IMR-90 (cell line): ENCODE measurements at regions of chr20 and their contacts with region 1.

Region 1: GRCh38 chr20:63775096-63775978 is 35.8 kb downstream of the SLC2A4RG start:
- DNase-seq: peak; percentile 19
- ATAC-seq: peak; percentile 71
- H3K4me3 ChIP-seq: peak overlapping the region; percentile 18; the same call in 1 of the 2 replicates
- H3K27ac ChIP-seq: no peak overlapping the region
- H3K4me1 ChIP-seq: peaks cover 8% of the 10 kb centered on the region
- H3K27me3 ChIP-seq: no peaks in the 10 kb centered on the region
- CTCF ChIP-seq: peak; percentile 67
- POLR2A ChIP-seq: no peak
- RAD21 ChIP-seq: peak; percentile 61

Region 2: DNA sequence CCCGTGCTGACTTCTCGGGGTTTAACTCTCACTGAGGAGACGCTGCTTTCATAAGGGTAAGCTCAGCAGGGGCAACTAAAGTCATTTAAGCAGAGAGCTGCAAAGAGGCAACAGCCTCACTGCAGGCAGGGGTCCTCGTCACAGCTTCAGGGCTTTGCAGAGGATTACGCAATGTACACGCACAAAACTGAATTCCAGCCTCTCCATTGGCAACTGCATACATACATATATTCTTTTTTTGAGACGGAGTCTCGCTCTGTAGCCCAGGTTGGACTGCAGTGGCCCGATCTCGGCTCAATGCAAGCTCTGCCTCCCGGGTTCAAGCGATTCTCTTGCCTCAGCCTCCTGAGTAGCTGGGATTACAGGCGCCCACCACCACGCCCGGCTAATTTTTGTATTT is 150.9 kb before region 1 on chr20:
- CTCF ChIA-PET with region 1: no interaction called
- POLR2A ChIA-PET with region 1: no interaction called
- dilution Hi-C with region 1: no loop called
- in situ Hi-C with region 1: no loop called
- intact Hi-C with region 1: no loop called
- DNase-seq: peak; percentile 49
- ATAC-seq: no peak
- H3K4me3 ChIP-seq: no peak overlapping the region
- H3K27ac ChIP-seq: no peak overlapping the region
- H3K4me1 ChIP-seq: peaks cover 2% of the 10 kb centered on the region; the same call in 1 of the 2 replicates
- H3K27me3 ChIP-seq: no peaks in the 10 kb centered on the region
- CTCF ChIP-seq: 0 out of 2 replicates have a peak, but pooled peaks have one; percentile 15
- POLR2A ChIP-seq: no peak
- RAD21 ChIP-seq: no peak

Region 3: GRCh38 chr20:63733186-63734081 is 41.9 kb before region 1 on chr20:
- CTCF ChIA-PET with region 1: no interaction called
- POLR2A ChIA-PET with region 1: no interaction called
- dilution Hi-C with region 1: no loop called
- in situ Hi-C with region 1: no loop called
- intact Hi-C with region 1: no loop called
- DNase-seq: no peak
- ATAC-seq: no peak
- H3K4me3 ChIP-seq: no peak overlapping the region
- H3K27ac ChIP-seq: no peak overlapping the region
- H3K4me1 ChIP-seq: no peaks in the 10 kb centered on the region; the same call in 1 of the 2 replicates
- H3K27me3 ChIP-seq: no peaks in the 10 kb centered on the region
- CTCF ChIP-seq: no peak
- POLR2A ChIP-seq: no peak
- RAD21 ChIP-seq: no peak

Region 4: GRCh38 chr20:63973636-63974402 is 198.5 kb after region 1 on chr20:
- CTCF ChIA-PET with region 1: interaction called, 3 read pairs
- POLR2A ChIA-PET with region 1: no interaction called
- dilution Hi-C with region 1: no loop called
- in situ Hi-C with region 1: no loop called
- intact Hi-C with region 1: loop called (anchors 5 kb)
- DNase-seq: peak; percentile 79
- ATAC-seq: peak; percentile 76
- H3K4me3 ChIP-seq: peak overlapping the region; percentile 45
- H3K27ac ChIP-seq: no peak overlapping the region; the same call in 1 of the 2 replicates
- H3K4me1 ChIP-seq: peaks cover 27% of the 10 kb centered on the region
- H3K27me3 ChIP-seq: no peaks in the 10 kb centered on the region
- CTCF ChIP-seq: peak; percentile 98
- POLR2A ChIP-seq: no peak
- RAD21 ChIP-seq: peak; percentile 96